HepG2 (cell line): ENCODE measurements at regions of chr4 and their contacts with region 1.

Region 1: GRCh38 chr4:74675673-74676279 is 118.5 kb downstream of the BTC start:
- DNase-seq: peak; percentile 61
- ATAC-seq: peak; percentile 91
- H3K4me3 ChIP-seq: no peak overlapping the region
- H3K27ac ChIP-seq: no peak overlapping the region
- H3K4me1 ChIP-seq: no peaks in the 10 kb centered on the region
- H3K27me3 ChIP-seq: no peaks in the 10 kb centered on the region
- CTCF ChIP-seq: peak; percentile 84
- EP300 ChIP-seq: no peak
- POLR2A ChIP-seq: no peak
- RAD21 ChIP-seq: peak; percentile 75

Region 2: GRCh38 chr4:74189331-74190043 is 486.3 kb before region 1 on chr4:
- CTCF ChIA-PET with region 1: no interaction called
- POLR2A ChIA-PET with region 1: no interaction called
- in situ Hi-C with region 1: no loop called
- intact Hi-C with region 1: loop called (anchors 2 kb)
- DNase-seq: peak; percentile 64
- ATAC-seq: peak; percentile 35; the same call in 2 of the 3 replicates
- H3K4me3 ChIP-seq: no peak overlapping the region
- H3K27ac ChIP-seq: no peak overlapping the region
- H3K4me1 ChIP-seq: peaks cover 25% of the 10 kb centered on the region
- H3K27me3 ChIP-seq: peaks cover 0 to 9% of the 10 kb centered on the region in 2 experiments; a peak in 1 of 5 replicates
- CTCF ChIP-seq: peak; percentile 61
- EP300 ChIP-seq: no peak
- POLR2A ChIP-seq: no peak
- RAD21 ChIP-seq: no peak

Region 3: DNA sequence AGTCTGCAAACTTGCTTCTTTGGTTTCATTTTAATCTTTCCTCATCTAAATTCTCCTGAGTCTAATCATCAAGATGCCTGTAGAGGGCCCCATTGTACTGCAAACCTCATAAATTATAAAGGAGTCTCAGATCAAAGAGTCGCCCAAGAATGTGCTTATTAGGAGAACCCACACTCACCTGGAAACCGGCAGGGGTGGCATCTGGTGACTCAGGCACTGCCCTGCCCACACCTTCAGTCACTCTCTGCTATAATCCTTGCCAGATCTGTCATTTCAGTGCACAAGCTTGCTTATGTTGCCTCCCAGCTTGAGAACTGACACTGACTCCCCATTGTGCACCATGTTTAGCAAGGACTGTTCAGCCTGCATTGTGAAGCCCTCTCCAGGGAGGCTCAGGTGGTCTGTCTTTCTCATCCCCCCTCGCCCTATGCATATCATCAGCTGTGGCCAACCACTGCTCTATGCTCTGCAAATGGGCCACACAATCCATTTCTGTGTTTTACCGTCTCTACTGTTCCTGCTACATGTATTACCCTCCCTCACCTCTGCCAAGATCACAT is 355.1 kb before region 1 on chr4:
- CTCF ChIA-PET with region 1: interaction called, 25 read pairs
- POLR2A ChIA-PET with region 1: interaction called, 4 read pairs
- in situ Hi-C with region 1: loop called (anchors 5 kb)
- intact Hi-C with region 1: loop called (anchors 1 kb)
- DNase-seq: peak; percentile 58
- ATAC-seq: peak; percentile 81
- H3K4me3 ChIP-seq: no peak overlapping the region
- H3K27ac ChIP-seq: no peak overlapping the region
- H3K4me1 ChIP-seq: no peaks in the 10 kb centered on the region
- H3K27me3 ChIP-seq: no peaks in the 10 kb centered on the region
- CTCF ChIP-seq: peak; percentile 42
- EP300 ChIP-seq: no peak
- POLR2A ChIP-seq: no peak
- RAD21 ChIP-seq: peak; percentile 33; the same call in 1 of the 2 replicates

Region 4: DNA sequence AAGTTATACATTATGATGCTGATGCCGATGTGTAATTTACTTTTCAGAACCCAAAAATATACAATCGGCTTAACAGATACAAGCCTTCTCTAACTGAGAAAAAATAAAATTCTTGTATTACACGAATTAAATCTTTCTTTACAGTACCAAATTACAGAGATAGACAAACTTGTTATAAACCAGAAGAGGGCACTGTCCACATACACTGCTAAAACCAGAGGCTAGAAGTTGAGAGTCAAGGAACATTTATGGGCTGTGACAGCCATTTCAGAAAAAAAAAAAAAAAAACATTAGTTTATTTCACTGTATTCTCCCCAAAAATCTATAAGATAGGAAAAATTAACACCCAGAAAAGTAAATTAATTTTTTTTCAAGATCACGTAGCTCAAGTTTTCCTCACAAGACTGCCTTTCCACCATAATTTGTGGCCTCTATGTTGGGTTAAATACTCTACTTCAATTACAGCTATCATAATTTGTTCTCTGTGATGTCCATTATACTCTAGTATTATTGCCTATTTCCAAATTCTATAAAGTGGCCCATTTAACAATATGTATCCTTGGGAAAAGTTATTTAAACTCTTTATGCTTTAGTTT is 298.8 kb before region 1 on chr4:
- CTCF ChIA-PET with region 1: interaction called, 36 read pairs
- POLR2A ChIA-PET with region 1: no interaction called
- in situ Hi-C with region 1: loop called (anchors 5 kb)
- intact Hi-C with region 1: loop called (anchors 1 kb)
- DNase-seq: peak; percentile 45
- ATAC-seq: peak; percentile 60; the same call in 2 of the 3 replicates
- H3K4me3 ChIP-seq: no peak overlapping the region
- H3K27ac ChIP-seq: no peak overlapping the region
- H3K4me1 ChIP-seq: no peaks in the 10 kb centered on the region
- H3K27me3 ChIP-seq: no peaks in the 10 kb centered on the region
- CTCF ChIP-seq: peak; percentile 52
- EP300 ChIP-seq: no peak
- POLR2A ChIP-seq: no peak
- RAD21 ChIP-seq: no peak

Region 5: DNA sequence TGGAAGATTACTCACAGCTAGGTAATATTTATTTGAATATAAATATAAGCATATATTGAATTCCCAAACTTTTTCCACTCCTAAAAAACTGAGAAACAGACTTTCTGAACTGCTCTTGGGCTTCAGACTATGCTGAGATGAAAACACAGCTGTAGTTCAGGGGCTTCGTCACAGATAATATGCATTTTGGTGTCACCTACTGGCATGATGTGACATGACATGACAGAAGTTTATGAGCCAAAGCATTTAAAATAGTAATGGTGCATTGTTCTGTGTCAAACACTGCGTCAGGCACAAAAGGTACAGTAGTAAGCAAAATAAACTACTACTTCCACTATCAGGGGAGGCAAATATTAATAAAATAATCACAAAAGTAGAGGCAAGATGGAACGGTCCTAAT is 52.7 kb before region 1 on chr4:
- CTCF ChIA-PET with region 1: no interaction called
- POLR2A ChIA-PET with region 1: no interaction called
- in situ Hi-C with region 1: no loop called
- intact Hi-C with region 1: loop called (anchors 1 kb)
- DNase-seq: peak; percentile 66
- ATAC-seq: peak; percentile 84
- H3K4me3 ChIP-seq: no peak overlapping the region
- H3K27ac ChIP-seq: peak overlapping the region; percentile 73
- H3K4me1 ChIP-seq: peaks cover 56% of the 10 kb centered on the region
- H3K27me3 ChIP-seq: no peaks in the 10 kb centered on the region
- CTCF ChIP-seq: peak; percentile 71
- EP300 ChIP-seq: no peak
- POLR2A ChIP-seq: no peak
- RAD21 ChIP-seq: peak; percentile 63; the same call in 1 of the 2 replicates

Region 6: DNA sequence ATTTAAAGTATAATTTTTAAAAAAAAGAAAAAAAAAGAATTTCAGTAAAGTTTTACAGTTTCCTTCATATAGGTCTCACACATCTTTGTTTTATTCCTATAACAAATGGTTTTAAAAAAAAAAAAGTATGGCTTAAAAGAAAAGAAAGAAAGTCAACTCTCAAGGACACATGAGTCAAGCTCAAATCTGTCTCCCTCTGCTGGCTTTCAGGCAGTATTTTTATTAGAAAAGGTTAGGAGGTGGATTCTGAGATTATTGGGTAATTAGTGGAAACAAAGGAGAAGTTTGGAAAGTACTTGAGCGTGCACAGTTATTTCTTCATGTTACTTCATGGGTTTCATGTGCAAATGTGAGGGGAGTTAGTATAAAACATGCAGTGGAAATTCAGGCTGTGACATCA is 155.1 kb after region 1 on chr4:
- CTCF ChIA-PET with region 1: no interaction called
- POLR2A ChIA-PET with region 1: no interaction called
- in situ Hi-C with region 1: no loop called
- intact Hi-C with region 1: no loop called
- DNase-seq: no peak
- ATAC-seq: no peak
- H3K4me3 ChIP-seq: no peak overlapping the region
- H3K27ac ChIP-seq: no peak overlapping the region
- H3K4me1 ChIP-seq: no peaks in the 10 kb centered on the region
- H3K27me3 ChIP-seq: no peaks in the 10 kb centered on the region
- CTCF ChIP-seq: no peak
- EP300 ChIP-seq: no peak
- POLR2A ChIP-seq: no peak
- RAD21 ChIP-seq: no peak